ENCODE measurements at regions of chrX and their contacts with region 1.

Region 1: GRCh38 chrX:19739683-19740082 is 147.7 kb downstream of the SH3KBP1 start:
- DNase-seq: no peak
- H3K4me3 Mint-ChIP-seq: no peak overlapping the region
- H3K27ac Mint-ChIP-seq: peak overlapping the region; percentile 83
- H3K4me1 Mint-ChIP-seq: peaks cover 54% of the 10 kb centered on the region
- H3K27me3 Mint-ChIP-seq: no peaks in the 10 kb centered on the region

Region 2: GRCh38 chrX:19544693-19545305 is 194.9 kb before region 1 on chrX:
- intact Hi-C with region 1: loop called (anchors 2 kb)
- DNase-seq: no peak
- H3K4me3 Mint-ChIP-seq: no peak overlapping the region
- H3K27ac Mint-ChIP-seq: peak overlapping the region; percentile 61
- H3K4me1 Mint-ChIP-seq: peaks cover 35% of the 10 kb centered on the region
- H3K27me3 Mint-ChIP-seq: no peaks in the 10 kb centered on the region

Region 3: DNA sequence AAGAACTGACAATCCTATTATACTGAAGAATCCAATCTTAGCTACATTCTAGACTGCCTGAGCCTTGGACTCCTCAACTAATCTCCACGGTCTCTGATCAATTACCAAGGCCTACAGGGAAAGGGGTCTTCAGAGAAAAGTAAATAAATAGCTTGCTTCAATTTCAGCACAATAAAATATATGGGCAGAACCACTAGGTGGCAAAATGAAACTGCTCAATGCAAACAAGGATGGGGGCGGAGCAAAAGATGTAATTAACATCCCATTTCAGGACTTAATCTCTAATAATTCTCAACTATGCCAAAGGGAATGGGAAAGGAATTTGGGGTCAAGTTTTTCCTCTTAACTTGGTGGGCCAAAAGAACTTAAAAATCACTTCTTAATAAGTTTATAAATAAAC is 146.0 kb before region 1 on chrX:
- intact Hi-C with region 1: loop called (anchors 5 kb)
- DNase-seq: no peak
- H3K4me3 Mint-ChIP-seq: no peak overlapping the region
- H3K27ac Mint-ChIP-seq: no peak overlapping the region
- H3K4me1 Mint-ChIP-seq: peaks cover 5% of the 10 kb centered on the region
- H3K27me3 Mint-ChIP-seq: no peaks in the 10 kb centered on the region

Measured in activated T-helper 1 cell treated with anti-CD3 and anti-CD28 coated beads, Interleukin-12 subunit alpha, Interleukin-12 subunit beta, Interleukin-2, Interleukin-4 antibody, amounts not matched to agents 30 ng/mL and 10 ng/mL and 1 ng/mL, durations not matched to agents 14 hours and 24 hours and 36 hours (primary cell).